Pancreas (tissue), 10 donors: ENCODE measurements at regions of chr7 and their contacts with region 1.

Region 1: GRCh38 chr7:41711283-41712064 is 8.6 kb upstream of the INHBA start:
- DNase-seq: peak in 1 of 6 donors; percentile 33
- ATAC-seq: peak in 3 of 4 donors; percentile 48 to 90 (median 62)
- H3K4me3 ChIP-seq: no peak overlapping the region
- H3K27ac ChIP-seq: no peak overlapping the region
- H3K4me1 ChIP-seq: no peaks in the 10 kb centered on the region
- H3K27me3 ChIP-seq: no peaks in the 10 kb centered on the region
- CTCF ChIP-seq: peak in 2 of 4 donors; percentile 10 to 16

Region 2: GRCh38 chr7:40329601-40330153 is 1381.8 kb before region 1 on chr7:
- intact Hi-C with region 1: loop called in 1 of 3 experiments (anchors 10 kb)
- DNase-seq: no peak
- ATAC-seq: peak in 3 of 4 donors; percentile 69 to 91 (median 78)
- H3K4me3 ChIP-seq: no peak overlapping the region
- H3K27ac ChIP-seq: no peak overlapping the region
- H3K4me1 ChIP-seq: no peaks in the 10 kb centered on the region
- H3K27me3 ChIP-seq: no peaks in the 10 kb centered on the region
- CTCF ChIP-seq: peak; percentile 56 to 74 (median 64)

Region 3: DNA sequence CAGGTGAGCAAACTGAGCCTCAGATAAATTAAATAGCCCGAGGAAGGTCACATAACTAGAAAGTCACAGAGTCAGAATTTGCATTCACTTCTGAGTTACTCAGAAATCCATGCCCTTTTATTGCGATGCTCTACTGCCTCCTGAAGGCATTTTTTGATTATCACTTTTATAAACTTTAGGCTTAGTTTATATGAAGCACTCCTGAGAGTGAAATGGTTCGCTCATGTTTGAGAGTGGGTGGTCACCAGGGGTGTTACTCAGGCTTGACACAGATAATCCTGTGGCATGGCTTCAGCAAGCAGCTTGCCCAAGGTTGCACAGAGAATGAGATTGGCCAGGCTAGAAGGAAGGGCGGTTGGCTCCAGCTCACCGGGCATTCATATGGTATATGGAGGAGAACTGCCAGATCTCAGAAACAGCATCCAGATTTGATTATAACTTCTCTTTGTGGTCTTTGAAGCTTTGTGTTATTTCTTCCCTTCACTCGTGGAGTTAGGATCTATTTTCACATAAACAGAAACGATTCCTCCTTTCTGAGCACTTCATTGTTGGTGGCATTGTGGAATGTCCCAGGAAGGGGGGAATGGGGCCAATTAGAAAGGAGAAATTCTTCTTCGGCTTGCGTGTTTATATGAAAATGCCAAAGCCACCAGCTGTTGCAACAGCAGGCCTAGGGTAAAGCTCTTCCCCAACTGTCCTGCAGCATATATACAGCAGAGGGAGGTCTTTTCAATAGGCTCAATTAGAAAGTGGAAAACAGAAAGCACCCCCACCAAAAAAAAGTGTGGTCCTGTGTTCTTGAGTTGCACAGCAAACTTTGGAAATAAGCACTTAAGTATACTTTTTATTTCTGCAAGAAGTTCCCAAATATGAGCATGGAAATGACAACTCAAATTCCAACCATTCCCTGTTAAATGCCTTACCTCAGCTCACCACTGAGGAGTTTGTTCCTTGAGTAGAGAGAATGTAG is 947.9 kb before region 1 on chr7:
- intact Hi-C with region 1: no loop called
- DNase-seq: no peak
- ATAC-seq: no peak
- H3K4me3 ChIP-seq: no peak overlapping the region
- H3K27ac ChIP-seq: no peak overlapping the region
- H3K4me1 ChIP-seq: no peaks in the 10 kb centered on the region
- H3K27me3 ChIP-seq: no peaks in the 10 kb centered on the region
- CTCF ChIP-seq: no peak

Region 4: GRCh38 chr7:42025635-42026375 is 314.3 kb after region 1 on chr7:
- intact Hi-C with region 1: no loop called
- DNase-seq: no peak
- ATAC-seq: peak in 2 of 4 donors; percentile 56 to 70
- H3K4me3 ChIP-seq: no peak overlapping the region
- H3K27ac ChIP-seq: no peak overlapping the region
- H3K4me1 ChIP-seq: no peaks in the 10 kb centered on the region
- H3K27me3 ChIP-seq: no peaks in the 10 kb centered on the region
- CTCF ChIP-seq: no peak

Region 5: DNA sequence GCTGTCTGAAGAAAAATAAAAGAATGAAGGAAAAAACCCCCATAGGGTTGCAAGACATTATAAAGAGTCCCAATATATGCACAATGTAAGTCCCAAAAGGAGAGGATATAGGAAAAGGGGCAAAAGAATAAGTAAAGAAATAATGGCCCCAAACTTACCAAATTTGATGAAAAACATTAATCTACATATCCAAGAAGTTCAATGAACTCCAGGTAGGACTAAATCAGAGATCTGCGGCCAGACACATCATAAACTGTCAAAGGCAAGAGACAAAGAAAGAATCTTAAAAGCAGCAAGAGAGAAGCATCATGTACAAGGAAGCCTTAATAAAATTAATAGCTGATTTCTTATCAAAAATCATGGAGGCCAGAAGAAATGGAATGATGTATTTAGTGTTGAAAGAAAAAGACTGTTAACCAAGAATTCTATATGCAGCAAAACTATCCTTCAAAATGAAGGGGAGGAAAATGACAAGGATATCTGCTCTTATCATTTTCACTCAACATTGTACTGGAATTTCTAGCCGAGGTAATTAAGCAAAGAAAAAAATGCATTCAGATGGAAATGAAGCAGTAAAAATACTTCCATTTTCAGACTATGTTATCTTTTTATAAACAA is 621.2 kb after region 1 on chr7:
- intact Hi-C with region 1: no loop called
- DNase-seq: no peak
- ATAC-seq: no peak
- H3K4me3 ChIP-seq: no peak overlapping the region
- H3K27ac ChIP-seq: no peak overlapping the region
- H3K4me1 ChIP-seq: no peaks in the 10 kb centered on the region
- H3K27me3 ChIP-seq: no peaks in the 10 kb centered on the region
- CTCF ChIP-seq: no peak